ENCODE measurements at regions of chr11 and their contacts with region 1.

Region 1: GRCh38 chr11:76919887-76920746 is 59.4 kb downstream of the ACER3 start:
- DNase-seq: peak; percentile 69
- ATAC-seq: peak; percentile 82
- H3K4me3 Mint-ChIP-seq: peak overlapping the region; percentile 38
- H3K27ac Mint-ChIP-seq: no peak overlapping the region
- H3K4me1 Mint-ChIP-seq: peaks cover 6% of the 10 kb centered on the region
- H3K27me3 Mint-ChIP-seq: no peaks in the 10 kb centered on the region
- CTCF ChIP-seq: peak; percentile 73

Region 2: GRCh38 chr11:76799066-76799804 is 120.9 kb before region 1 on chr11:
- CTCF ChIA-PET with region 1: interaction called, 67 read pairs
- POLR2A ChIA-PET with region 1: no interaction called
- intact Hi-C with region 1: no loop called
- DNase-seq: peak; percentile 84
- ATAC-seq: peak; percentile 86
- H3K4me3 Mint-ChIP-seq: peak overlapping the region; percentile 15
- H3K27ac Mint-ChIP-seq: no peak overlapping the region
- H3K4me1 Mint-ChIP-seq: peaks cover 22% of the 10 kb centered on the region
- H3K27me3 Mint-ChIP-seq: no peaks in the 10 kb centered on the region
- CTCF ChIP-seq: peak; percentile 95

Region 3: GRCh38 chr11:76872959-76873827 is 46.9 kb before region 1 on chr11:
- CTCF ChIA-PET with region 1: interaction called, 32 read pairs
- POLR2A ChIA-PET with region 1: no interaction called
- intact Hi-C with region 1: no loop called
- DNase-seq: no peak
- ATAC-seq: no peak
- H3K4me3 Mint-ChIP-seq: no peak overlapping the region
- H3K27ac Mint-ChIP-seq: no peak overlapping the region
- H3K4me1 Mint-ChIP-seq: peaks cover 2% of the 10 kb centered on the region
- H3K27me3 Mint-ChIP-seq: no peaks in the 10 kb centered on the region
- CTCF ChIP-seq: no peak

Region 4: GRCh38 chr11:76903329-76903728 is 16.8 kb before region 1 on chr11:
- CTCF ChIA-PET with region 1: interaction called, 82 read pairs
- POLR2A ChIA-PET with region 1: no interaction called
- intact Hi-C with region 1: no loop called
- DNase-seq: no peak
- ATAC-seq: no peak
- H3K4me3 Mint-ChIP-seq: no peak overlapping the region
- H3K27ac Mint-ChIP-seq: no peak overlapping the region
- H3K4me1 Mint-ChIP-seq: peaks cover 10% of the 10 kb centered on the region
- H3K27me3 Mint-ChIP-seq: no peaks in the 10 kb centered on the region
- CTCF ChIP-seq: no peak

Region 5: GRCh38 chr11:76987203-76987602 is 67.1 kb after region 1 on chr11:
- CTCF ChIA-PET with region 1: interaction called, 11 read pairs
- POLR2A ChIA-PET with region 1: no interaction called
- intact Hi-C with region 1: no loop called
- DNase-seq: no peak
- ATAC-seq: no peak
- H3K4me3 Mint-ChIP-seq: no peak overlapping the region
- H3K27ac Mint-ChIP-seq: no peak overlapping the region
- H3K4me1 Mint-ChIP-seq: no peaks in the 10 kb centered on the region
- H3K27me3 Mint-ChIP-seq: no peaks in the 10 kb centered on the region
- CTCF ChIP-seq: no peak

Region 6: DNA sequence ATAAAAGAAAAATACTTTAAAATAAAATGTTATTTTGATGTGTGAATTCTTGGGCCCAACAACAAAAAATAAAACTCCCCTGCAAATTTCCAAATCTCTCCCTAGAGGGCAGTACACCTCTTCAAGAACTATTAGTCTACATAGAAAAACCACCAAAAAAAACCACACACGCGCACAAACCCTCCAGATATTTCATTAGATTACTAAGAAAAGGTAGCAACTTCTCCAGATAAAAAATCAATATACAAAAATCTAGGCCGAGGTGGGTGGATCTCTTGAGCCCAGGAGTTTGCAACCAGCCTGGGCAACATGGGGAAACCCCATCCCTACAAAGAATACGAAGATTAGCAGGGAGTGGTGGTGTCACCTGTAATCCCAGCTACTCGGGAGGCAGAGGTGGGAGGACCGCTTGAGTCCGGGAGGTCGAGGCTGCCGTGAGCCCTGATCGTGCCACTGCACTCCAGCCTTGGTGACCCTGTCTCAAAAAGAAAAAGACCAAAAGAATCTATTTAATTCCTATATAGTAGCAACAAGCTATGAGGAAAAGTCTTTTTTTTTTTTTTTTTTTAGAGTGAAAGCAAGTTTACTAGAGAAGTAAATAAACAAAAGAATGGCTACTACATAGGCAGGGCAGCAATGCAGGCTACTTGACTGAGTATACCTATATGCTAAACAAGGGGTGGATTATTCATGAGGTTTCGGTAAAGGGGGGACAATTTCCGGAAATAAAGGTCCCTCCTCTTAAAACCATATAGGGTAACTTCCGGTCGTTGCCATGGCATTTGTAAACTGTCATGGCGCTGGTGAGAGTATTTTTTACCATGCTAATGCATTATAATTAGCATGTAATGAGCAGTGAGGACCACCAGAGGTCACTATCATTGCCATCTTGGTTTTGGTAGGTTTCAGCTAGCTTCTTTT is 127.2 kb after region 1 on chr11:
- CTCF ChIA-PET with region 1: interaction called, 29 read pairs
- POLR2A ChIA-PET with region 1: no interaction called
- intact Hi-C with region 1: no loop called
- DNase-seq: peak; percentile 89
- ATAC-seq: peak; percentile 91
- H3K4me3 Mint-ChIP-seq: peak overlapping the region; percentile 62
- H3K27ac Mint-ChIP-seq: peak overlapping the region; percentile 52
- H3K4me1 Mint-ChIP-seq: peaks cover 13% of the 10 kb centered on the region
- H3K27me3 Mint-ChIP-seq: peaks cover 17% of the 10 kb centered on the region
- CTCF ChIP-seq: no peak

Region 7: GRCh38 chr11:77073328-77074001 is 153.3 kb after region 1 on chr11:
- CTCF ChIA-PET with region 1: no interaction called
- POLR2A ChIA-PET with region 1: no interaction called
- intact Hi-C with region 1: no loop called
- DNase-seq: no peak
- ATAC-seq: peak; percentile 67
- H3K4me3 Mint-ChIP-seq: no peak overlapping the region
- H3K27ac Mint-ChIP-seq: no peak overlapping the region
- H3K4me1 Mint-ChIP-seq: peaks cover 23% of the 10 kb centered on the region
- H3K27me3 Mint-ChIP-seq: no peaks in the 10 kb centered on the region
- CTCF ChIP-seq: no peak

Region 8: DNA sequence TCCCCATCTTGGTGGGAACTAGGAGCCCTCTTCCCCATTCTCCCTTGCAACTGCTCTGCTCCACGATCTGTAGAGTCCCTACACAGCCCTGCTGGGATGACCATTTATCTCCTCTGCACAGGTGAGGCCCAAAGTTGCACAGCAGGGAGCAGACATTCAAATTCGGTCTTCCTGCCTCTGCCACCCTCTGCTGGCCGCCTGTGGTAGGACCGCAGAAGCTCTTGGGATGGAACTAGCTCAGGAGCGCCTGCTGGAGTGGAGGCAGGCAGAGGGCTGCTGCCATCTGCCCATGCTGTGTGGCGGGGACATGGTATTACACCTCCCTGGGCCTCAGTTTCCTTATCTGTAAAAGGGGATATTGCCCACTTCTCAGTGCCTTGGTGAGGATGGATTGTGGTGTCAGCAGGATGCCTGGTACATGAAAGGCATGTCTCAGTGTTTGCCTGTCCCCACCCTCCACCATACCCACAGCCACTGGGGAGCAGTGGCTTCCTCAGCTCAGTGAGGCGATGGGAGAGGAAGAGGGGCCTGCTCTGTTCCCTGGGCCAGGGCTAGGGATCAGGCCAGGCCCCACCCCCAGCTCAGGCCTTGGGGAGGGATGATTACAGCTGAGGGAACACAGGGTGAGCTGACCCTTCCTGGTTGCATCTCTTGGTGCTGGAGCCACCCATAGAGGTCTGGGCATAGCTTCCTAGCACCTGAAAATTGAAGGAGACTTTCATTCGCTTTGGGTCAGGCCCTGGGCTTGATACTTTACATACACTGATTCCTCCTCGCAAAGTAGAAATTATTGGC is 171.2 kb after region 1 on chr11:
- CTCF ChIA-PET with region 1: interaction called, 43 read pairs
- POLR2A ChIA-PET with region 1: no interaction called
- intact Hi-C with region 1: no loop called
- DNase-seq: peak; percentile 92
- ATAC-seq: peak; percentile 100
- H3K4me3 Mint-ChIP-seq: no peak overlapping the region
- H3K27ac Mint-ChIP-seq: no peak overlapping the region
- H3K4me1 Mint-ChIP-seq: peaks cover 5% of the 10 kb centered on the region
- H3K27me3 Mint-ChIP-seq: no peaks in the 10 kb centered on the region
- CTCF ChIP-seq: peak; percentile 75

Region 9: GRCh38 chr11:77202941-77203900 is 283.1 kb after region 1 on chr11:
- CTCF ChIA-PET with region 1: no interaction called
- POLR2A ChIA-PET with region 1: no interaction called
- intact Hi-C with region 1: no loop called
- DNase-seq: no peak
- ATAC-seq: no peak
- H3K4me3 Mint-ChIP-seq: no peak overlapping the region
- H3K27ac Mint-ChIP-seq: no peak overlapping the region
- H3K4me1 Mint-ChIP-seq: no peaks in the 10 kb centered on the region
- H3K27me3 Mint-ChIP-seq: no peaks in the 10 kb centered on the region
- CTCF ChIP-seq: no peak

Region 10: DNA sequence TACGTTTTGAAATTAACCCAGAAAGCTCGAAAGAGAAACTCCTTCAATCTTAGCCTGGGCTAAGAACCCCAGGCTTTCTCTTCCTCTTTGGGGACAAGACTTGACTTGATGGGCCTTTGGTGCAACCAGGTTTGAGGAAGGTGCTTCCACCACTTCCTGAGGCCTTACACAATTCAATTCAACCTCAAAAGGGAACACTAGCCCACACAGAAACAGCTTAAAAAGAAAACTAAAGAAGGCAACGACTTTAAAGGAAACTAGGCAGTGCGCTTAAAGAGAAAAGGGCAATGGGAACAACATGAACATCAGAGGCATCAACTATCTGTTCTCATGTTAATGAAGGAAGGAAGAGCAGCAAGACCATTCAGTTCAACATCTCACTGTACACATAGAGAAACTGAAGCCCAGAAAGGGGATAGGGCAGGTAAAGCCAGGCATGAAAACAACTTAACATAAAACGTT is 529.0 kb after region 1 on chr11:
- CTCF ChIA-PET with region 1: no interaction called
- POLR2A ChIA-PET with region 1: no interaction called
- intact Hi-C with region 1: no loop called
- DNase-seq: no peak
- ATAC-seq: peak; percentile 38
- H3K4me3 Mint-ChIP-seq: peak overlapping the region; percentile 19
- H3K27ac Mint-ChIP-seq: peak overlapping the region; percentile 80
- H3K4me1 Mint-ChIP-seq: peaks cover 43% of the 10 kb centered on the region
- H3K27me3 Mint-ChIP-seq: no peaks in the 10 kb centered on the region
- CTCF ChIP-seq: no peak

Measured in activated CD8-positive, alpha-beta T cell treated with anti-CD3 and anti-CD28 coated beads for 36 hours (primary cell).